Tibial artery (tissue), 4 donors: ENCODE measurements at regions of chr6 and their contacts with region 1.

Region 1: DNA sequence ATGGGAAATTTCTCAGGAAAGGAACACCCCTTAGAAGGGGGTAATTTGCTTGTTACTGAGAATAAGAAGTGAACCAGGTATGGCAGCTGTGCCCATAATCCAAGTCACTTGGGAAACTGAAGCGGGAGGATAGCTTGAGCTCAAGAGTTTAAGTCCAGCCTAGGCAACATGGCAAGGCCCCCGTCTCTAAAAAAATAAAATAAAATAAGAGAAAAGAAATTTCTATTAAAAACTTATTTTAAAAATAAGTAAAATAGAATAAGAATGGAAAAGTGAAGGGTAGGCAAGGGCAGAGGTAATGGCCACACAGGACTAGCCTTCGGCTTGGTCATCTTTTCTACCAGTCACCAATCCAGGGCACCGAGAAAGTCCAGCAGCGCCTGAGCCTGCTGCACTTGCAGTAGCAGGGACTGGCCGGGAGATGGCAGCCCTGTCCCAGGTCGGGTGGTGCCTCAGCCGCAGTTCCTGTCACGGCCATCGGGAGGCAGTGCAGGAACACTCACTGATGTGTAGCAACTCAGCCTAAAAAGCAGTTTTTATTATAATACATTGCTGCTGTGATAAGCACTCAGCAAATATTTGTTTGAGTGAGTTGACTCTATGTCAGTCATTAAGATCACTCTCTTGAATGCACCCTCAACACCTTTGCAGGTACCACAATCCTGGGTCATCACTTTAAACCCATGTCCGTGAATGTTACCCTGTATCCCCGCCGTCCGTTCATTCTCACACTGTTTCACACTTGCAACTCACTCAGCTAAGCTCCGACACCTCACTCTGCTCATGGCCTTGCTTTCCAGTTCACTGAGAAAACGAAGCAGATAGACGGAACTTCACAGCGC is 23.2 kb upstream of the GCM1 start:
- DNase-seq: peak; percentile 90 to 91
- H3K4me3 ChIP-seq: no peak overlapping the region
- H3K27ac ChIP-seq: no peak overlapping the region
- H3K4me1 ChIP-seq: no peaks in the 10 kb centered on the region
- H3K27me3 ChIP-seq: no peaks in the 10 kb centered on the region
- CTCF ChIP-seq: peak; percentile 100

Region 2: DNA sequence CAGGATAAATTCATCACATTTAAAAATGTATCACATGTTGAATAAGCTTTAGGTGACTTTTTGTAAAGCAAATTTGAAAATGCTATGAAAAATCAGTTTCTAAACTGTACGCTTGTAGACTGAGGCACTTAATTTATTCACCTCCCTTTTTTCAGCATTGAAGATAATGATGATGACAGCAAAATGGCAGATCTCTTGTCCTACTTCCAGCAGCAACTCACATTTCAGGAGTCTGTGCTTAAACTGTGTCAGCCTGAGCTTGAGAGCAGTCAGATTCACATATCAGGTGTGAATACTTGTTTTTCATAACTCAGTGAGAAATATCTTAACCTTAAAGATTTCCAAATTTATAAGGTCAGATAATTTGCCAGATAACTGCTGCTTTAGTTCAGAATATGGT is 91.0 kb before region 1 on chr6:
- intact Hi-C with region 1: no loop called
- DNase-seq: no peak
- H3K4me3 ChIP-seq: no peak overlapping the region
- H3K27ac ChIP-seq: no peak overlapping the region
- H3K4me1 ChIP-seq: no peaks in the 10 kb centered on the region
- H3K27me3 ChIP-seq: no peaks in the 10 kb centered on the region
- CTCF ChIP-seq: no peak

Region 3: GRCh38 chr6:53128842-53129241 is 43.0 kb before region 1 on chr6:
- intact Hi-C with region 1: no loop called
- DNase-seq: no peak
- H3K4me3 ChIP-seq: no peak overlapping the region
- H3K27ac ChIP-seq: no peak overlapping the region
- H3K4me1 ChIP-seq: no peaks in the 10 kb centered on the region
- H3K27me3 ChIP-seq: peaks cover 0 to 11% of the 10 kb centered on the region in 2 donors
- CTCF ChIP-seq: no peak

Region 4: GRCh38 chr6:53294095-53294494 is 122.3 kb after region 1 on chr6:
- intact Hi-C with region 1: loop called (anchors 5 kb)
- DNase-seq: no peak
- H3K4me3 ChIP-seq: no peak overlapping the region
- H3K27ac ChIP-seq: no peak overlapping the region
- H3K4me1 ChIP-seq: peaks cover 0 to 1% (median 0%) of the 10 kb centered on the region in 4 donors
- H3K27me3 ChIP-seq: no peaks in the 10 kb centered on the region
- CTCF ChIP-seq: peak; percentile 20 to 29

Region 5: DNA sequence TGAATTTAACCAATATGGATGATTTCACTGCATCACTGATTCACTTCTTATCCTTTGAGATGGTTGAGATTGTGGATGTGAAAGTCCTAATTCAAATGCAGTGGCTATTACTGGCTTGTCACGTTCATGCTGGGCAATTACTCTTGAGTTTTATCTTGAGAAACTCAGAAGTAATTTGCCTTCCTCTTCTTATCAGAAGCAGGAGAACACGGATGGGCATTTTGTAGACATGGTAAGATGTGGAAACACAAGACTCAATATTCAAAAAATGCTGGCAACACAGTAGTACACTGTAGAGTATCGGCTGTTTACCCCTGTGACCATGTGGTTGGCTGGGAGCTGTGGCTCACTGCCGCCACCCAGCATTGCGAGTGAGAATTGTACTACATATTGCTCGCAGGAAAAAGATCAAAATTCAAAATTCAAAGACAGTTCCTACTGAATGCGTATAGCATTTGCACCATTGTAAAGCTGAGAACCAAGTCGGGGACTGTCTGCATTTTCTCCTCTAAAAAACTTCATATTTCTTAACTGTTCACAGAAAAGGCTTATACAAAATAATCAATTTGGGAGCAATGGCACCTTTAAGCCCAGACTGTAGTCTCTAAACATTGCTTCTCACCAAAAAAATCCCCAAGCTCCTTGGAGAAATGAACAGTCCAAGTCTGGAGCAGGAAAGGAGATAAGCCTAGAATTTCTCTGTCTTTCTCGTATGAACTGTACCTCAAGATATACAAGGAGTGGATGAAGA is 238.9 kb after region 1 on chr6:
- intact Hi-C with region 1: loop called (anchors 10 kb)
- DNase-seq: peak in 1 of 2 donors; percentile 32
- H3K4me3 ChIP-seq: no peak overlapping the region
- H3K27ac ChIP-seq: no peak overlapping the region
- H3K4me1 ChIP-seq: no peaks in the 10 kb centered on the region
- H3K27me3 ChIP-seq: no peaks in the 10 kb centered on the region
- CTCF ChIP-seq: peak; percentile 45 to 46

Region 6: DNA sequence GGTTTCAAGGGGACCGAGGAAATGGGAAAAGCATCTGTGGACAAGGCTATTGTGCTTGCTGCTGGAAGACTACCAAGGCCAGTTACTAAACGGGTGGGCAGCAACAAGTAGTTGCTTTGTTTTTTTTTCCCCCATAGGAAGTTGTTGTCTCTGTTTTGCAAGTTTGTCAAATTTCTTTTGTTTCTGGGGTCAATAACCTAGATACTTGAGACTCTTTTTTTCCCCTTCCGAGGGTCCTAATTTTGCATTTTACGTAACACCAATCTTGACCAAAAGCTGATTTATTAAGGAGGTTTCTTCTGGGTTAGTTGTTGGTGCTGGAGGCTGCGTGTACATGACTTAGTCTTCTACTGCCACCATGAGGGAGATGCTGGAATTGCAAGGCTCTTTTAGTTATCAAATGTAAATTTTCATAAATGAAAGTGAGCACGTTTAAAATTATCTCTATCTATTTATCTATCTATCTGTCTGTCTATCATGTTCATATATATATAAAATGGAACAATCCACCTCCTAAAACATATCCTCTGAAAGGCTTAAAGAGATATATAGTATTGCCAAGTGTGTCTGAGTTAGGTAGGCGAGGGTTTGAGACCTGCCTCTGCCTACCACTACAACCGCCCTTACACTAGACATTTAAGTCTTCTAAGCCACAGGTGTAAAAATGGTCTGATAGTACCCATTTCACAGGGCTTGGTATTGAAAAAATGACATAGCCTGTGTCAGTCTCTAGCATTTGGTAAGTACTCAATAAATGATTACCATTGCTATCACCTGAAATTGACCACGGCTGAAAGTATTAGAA is 312.9 kb after region 1 on chr6:
- intact Hi-C with region 1: loop called (anchors 1 kb)
- DNase-seq: peak in 1 of 2 donors; percentile 89
- H3K4me3 ChIP-seq: no peak overlapping the region
- H3K27ac ChIP-seq: no peak overlapping the region
- H3K4me1 ChIP-seq: peaks cover 0 to 7% (median 2%) of the 10 kb centered on the region in 4 donors
- H3K27me3 ChIP-seq: peaks cover 0 to 11% of the 10 kb centered on the region in 2 donors
- CTCF ChIP-seq: peak; percentile 94 to 97

Region 7: GRCh38 chr6:53651764-53652401 is 480.1 kb after region 1 on chr6:
- intact Hi-C with region 1: loop called (anchors 10 kb)
- DNase-seq: peak; percentile 55 to 83
- H3K4me3 ChIP-seq: peak overlapping the region; percentile 49 to 61
- H3K27ac ChIP-seq: peak overlapping the region in 1 of 2 donors; percentile 9
- H3K4me1 ChIP-seq: peaks cover 0 to 13% (median 7%) of the 10 kb centered on the region in 4 donors
- H3K27me3 ChIP-seq: no peaks in the 10 kb centered on the region
- CTCF ChIP-seq: peak; percentile 11 to 24